GM12878 (cell line): ENCODE measurements at regions of chr6 and their contacts with region 1.

Region 1: DNA sequence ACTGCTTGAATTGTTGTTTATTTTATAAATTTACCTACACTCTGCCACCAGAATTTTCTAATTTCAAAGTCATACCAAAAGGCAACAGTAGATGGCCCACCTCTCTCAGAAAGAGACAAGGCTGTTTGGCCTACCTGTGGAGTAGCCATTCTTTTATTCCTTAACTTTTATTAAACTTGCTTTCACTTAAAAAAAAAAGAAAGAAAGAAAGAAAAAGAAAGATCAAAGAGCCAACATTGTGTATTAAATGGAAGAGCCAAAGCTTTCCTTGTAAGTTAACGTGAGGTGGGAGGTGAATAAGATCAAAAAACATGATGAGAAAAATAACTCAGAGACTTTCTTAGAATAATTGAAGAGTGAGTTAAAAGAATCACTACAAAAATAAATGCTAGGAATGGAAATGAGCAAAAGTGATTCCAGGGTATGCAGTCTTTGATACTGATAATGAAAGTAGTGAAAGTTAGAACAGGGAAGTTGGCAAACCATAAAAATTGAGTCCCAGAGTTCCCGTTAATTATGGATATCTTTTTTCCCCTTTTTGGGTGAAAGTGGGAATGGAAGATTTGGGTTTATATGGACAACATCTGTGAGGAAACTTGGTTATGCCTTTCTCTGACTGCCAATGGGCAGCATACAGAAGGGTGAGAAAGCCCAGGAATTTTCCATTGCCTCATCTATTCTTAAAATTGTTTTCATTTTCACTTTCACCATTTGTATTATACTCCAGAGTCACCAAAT is 35.9 kb upstream of the MYB start:
- DNase-seq: no peak
- ATAC-seq: peak; percentile 75
- H3K4me3 ChIP-seq: 0 out of 2 replicates have a peak overlapping the region, but pooled peaks have one; percentile 18
- H3K27ac ChIP-seq: 0 out of 2 replicates have a peak overlapping the region, but pooled peaks have one; percentile 29
- H3K4me1 ChIP-seq: peaks cover 40% of the 10 kb centered on the region
- H3K27me3 ChIP-seq: no peaks in the 10 kb centered on the region
- CTCF ChIP-seq: peak; percentile 50 to 72 (median 65)
- EP300 ChIP-seq: no peak
- POLR2A ChIP-seq: no peak
- RAD21 ChIP-seq: peak; percentile 93

Region 2: GRCh38 chr6:135054569-135055498 is 90.4 kb before region 1 on chr6 and contains the start of gene HBS1L:
- CTCF ChIA-PET with region 1: interaction called, 5 read pairs
- POLR2A ChIA-PET with region 1: interaction called, 3 read pairs
- RAD21 ChIA-PET with region 1: interaction called, 8 read pairs
- SMC1A ChIA-PET with region 1: interaction called, 23 read pairs
- in situ Hi-C with region 1: no loop called
- intact Hi-C with region 1: no loop called
- DNase-seq: peak; percentile 98
- ATAC-seq: peak; percentile 98
- H3K4me3 ChIP-seq: peak within 1 kb of the TSS; percentile 89
- H3K27ac ChIP-seq: peak within 1 kb of the TSS; percentile 94
- H3K4me1 ChIP-seq: no peaks in the 10 kb centered on the region
- H3K27me3 ChIP-seq: no peaks in the 10 kb centered on the region
- CTCF ChIP-seq: no peak
- EP300 ChIP-seq: no peak; a peak in 1 of 4 replicates
- POLR2A ChIP-seq: peak; percentile 96
- RAD21 ChIP-seq: no peak
- polyA plus RNA-seq, gene HBS1L: 58.7 to 83.6 TPM

Region 3: DNA sequence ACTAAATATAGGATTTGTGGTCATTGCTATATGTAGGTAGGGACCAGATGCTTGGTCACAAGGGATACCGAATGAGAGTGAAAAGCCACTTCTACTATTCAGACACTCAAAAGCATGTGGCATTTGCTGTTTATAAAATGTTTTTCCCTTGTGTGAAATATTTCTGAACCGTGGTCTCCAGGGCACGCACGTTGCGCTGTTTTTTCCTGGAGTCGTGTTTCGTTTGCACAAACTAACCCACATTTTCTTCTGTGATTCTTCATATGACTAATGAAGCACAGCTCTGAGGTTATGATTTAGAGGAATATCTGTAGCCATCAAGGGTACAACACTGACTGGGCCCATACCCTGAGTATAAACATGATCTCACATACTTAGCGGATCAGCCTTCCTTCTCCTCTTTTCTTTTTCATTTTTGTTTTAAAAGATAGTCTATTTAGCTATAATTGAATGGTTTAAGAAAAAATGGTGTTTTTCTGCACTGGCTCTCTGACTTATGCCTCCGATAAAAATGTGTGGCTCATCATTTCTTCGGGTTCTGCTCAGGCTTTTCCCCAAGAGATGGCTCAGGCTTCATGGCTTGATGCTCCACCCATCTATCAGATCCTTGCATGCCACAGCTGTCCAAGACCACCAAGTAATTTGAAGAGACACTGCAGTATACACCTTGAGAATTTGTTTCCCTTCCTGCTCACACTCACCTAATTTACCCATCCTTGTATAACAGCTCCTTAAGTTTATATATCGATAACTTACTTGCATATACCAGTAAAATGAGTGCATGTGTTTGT is 30.7 kb before region 1 on chr6:
- CTCF ChIA-PET with region 1: interaction called, 6 read pairs
- POLR2A ChIA-PET with region 1: interaction called, 6 read pairs
- RAD21 ChIA-PET with region 1: interaction called, 9 read pairs
- SMC1A ChIA-PET with region 1: interaction called, 14 read pairs
- in situ Hi-C with region 1: no loop called
- intact Hi-C with region 1: no loop called
- DNase-seq: peak; percentile 67
- ATAC-seq: peak; percentile 90
- H3K4me3 ChIP-seq: no peak overlapping the region; the same call in 1 of the 2 replicates
- H3K27ac ChIP-seq: peak overlapping the region; percentile 56
- H3K4me1 ChIP-seq: peaks cover 42% of the 10 kb centered on the region
- H3K27me3 ChIP-seq: no peaks in the 10 kb centered on the region
- CTCF ChIP-seq: no peak
- EP300 ChIP-seq: peak; percentile 97 to 98
- POLR2A ChIP-seq: no peak
- RAD21 ChIP-seq: no peak

Region 4: DNA sequence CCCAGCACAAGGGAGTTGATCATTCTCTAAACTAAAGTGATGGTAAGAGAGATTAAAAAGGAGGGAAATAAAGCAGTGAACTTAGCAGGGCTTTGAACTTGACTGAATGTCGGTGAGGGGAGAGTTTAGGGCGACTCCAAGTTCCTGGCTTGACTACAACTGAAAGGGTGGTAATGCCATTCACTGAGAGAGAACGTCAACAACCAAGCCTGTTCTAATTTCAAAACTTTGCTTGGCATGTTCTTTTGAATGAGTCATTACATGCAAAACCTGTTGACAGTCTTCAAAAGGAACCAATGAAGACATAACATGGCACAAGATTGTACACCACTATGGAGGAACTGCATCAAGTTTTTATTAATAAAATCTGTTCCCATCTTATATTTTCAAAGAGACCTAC is 25.6 kb after region 1 on chr6:
- CTCF ChIA-PET with region 1: interaction called, 149 read pairs
- POLR2A ChIA-PET with region 1: interaction called, 4 read pairs
- RAD21 ChIA-PET with region 1: interaction called, 6 read pairs
- SMC1A ChIA-PET with region 1: interaction called, 7 read pairs
- in situ Hi-C with region 1: no loop called
- intact Hi-C with region 1: no loop called
- DNase-seq: no peak
- ATAC-seq: peak; percentile 87
- H3K4me3 ChIP-seq: no peak overlapping the region
- H3K27ac ChIP-seq: no peak overlapping the region
- H3K4me1 ChIP-seq: peaks cover 15% of the 10 kb centered on the region; the same call in 1 of the 2 replicates
- H3K27me3 ChIP-seq: no peaks in the 10 kb centered on the region
- CTCF ChIP-seq: no peak
- EP300 ChIP-seq: no peak
- POLR2A ChIP-seq: no peak
- RAD21 ChIP-seq: no peak

Region 5: GRCh38 chr6:135423649-135424128 is 278.5 kb after region 1 on chr6:
- CTCF ChIA-PET with region 1: interaction called, 95 read pairs
- POLR2A ChIA-PET with region 1: no interaction called
- RAD21 ChIA-PET with region 1: interaction called, 41 read pairs
- SMC1A ChIA-PET with region 1: interaction called, 53 read pairs
- in situ Hi-C with region 1: no loop called
- intact Hi-C with region 1: loop called (anchors 1 kb)
- DNase-seq: peak; percentile 16
- ATAC-seq: peak; percentile 97
- H3K4me3 ChIP-seq: no peak overlapping the region
- H3K27ac ChIP-seq: no peak overlapping the region
- H3K4me1 ChIP-seq: peaks cover 4% of the 10 kb centered on the region; the same call in 1 of the 2 replicates
- H3K27me3 ChIP-seq: no peaks in the 10 kb centered on the region
- CTCF ChIP-seq: peak; percentile 61 to 80 (median 68)
- EP300 ChIP-seq: no peak
- POLR2A ChIP-seq: no peak
- RAD21 ChIP-seq: peak; percentile 88